AG04450 (cell line): ENCODE measurements at regions of chr20 and their contacts with region 1.

Region 1: GRCh38 chr20:39849664-39850063 is 839.4 kb downstream of the MAFB start:
- DNase-seq: peak; percentile 83
- H3K4me3 ChIP-seq: no peak overlapping the region
- H3K27ac ChIP-seq: peak overlapping the region; percentile 43
- H3K27me3 ChIP-seq: peaks cover 1% of the 10 kb centered on the region
- CTCF ChIP-seq: no peak

Region 2: DNA sequence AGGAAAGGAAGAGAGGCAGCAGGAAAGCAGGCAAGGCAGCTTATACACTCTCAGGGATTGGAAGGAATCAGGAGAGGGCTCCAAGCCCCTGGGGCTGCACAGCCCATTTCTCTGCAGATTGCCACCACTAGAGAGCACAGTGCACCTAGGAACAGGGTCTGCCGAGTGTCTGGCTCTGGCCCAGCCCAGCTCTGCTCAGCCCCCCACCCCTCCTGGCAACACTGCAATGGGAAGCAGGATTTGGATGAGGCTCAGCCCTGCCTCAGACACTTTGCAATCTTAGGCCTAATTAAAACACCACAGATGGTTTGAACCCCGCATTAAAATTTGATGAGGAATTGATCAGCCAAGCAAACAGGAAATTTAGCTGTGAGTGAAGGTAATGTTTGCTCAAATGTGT is 634.8 kb before region 1 on chr20:
- CTCF ChIA-PET with region 1: no interaction called
- POLR2A ChIA-PET with region 1: no interaction called
- DNase-seq: no peak
- H3K4me3 ChIP-seq: no peak overlapping the region
- H3K27ac ChIP-seq: no peak overlapping the region
- H3K27me3 ChIP-seq: no peaks in the 10 kb centered on the region
- CTCF ChIP-seq: no peak

Region 3: DNA sequence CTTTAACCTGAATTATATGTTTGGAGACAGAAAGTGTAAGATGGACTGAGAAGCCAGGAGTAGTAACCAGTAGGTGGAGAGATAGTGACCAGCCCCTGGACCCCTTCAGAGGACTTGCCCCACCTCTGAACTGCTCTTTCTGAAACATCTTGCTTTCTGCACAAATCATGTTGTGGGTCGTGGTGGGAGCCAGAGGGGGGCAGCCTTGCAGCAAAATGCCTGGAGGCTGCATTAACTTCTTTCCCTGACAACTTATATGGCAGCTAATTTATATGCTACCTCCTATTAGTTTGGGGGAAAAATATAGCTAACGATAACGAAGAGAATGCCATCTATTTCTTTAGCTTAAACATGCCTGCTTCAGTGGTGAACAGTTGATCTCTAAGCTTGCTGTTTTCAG is 20.4 kb before region 1 on chr20:
- CTCF ChIA-PET with region 1: interaction called, 15 read pairs
- POLR2A ChIA-PET with region 1: no interaction called
- DNase-seq: no peak
- H3K4me3 ChIP-seq: no peak overlapping the region
- H3K27ac ChIP-seq: no peak overlapping the region
- H3K27me3 ChIP-seq: peaks cover 5% of the 10 kb centered on the region
- CTCF ChIP-seq: peak; percentile 79

Region 4: GRCh38 chr20:40821429-40821828 is 971.8 kb after region 1 on chr20:
- CTCF ChIA-PET with region 1: no interaction called
- POLR2A ChIA-PET with region 1: no interaction called
- DNase-seq: no peak
- H3K4me3 ChIP-seq: no peak overlapping the region
- H3K27ac ChIP-seq: no peak overlapping the region
- H3K27me3 ChIP-seq: no peaks in the 10 kb centered on the region
- CTCF ChIP-seq: no peak